Activated CD8-positive, alpha-beta T cell treated with anti-CD3 and anti-CD28 coated beads, Interleukin-2, amount 10 ng/mL, durations not matched to agents 7 days and 5 days (primary cell): ENCODE measurements at regions of chr11 and their contacts with region 1.

Region 1: GRCh38 chr11:67482825-67483798 is at the start of gene AIP:
- DNase-seq: peak; percentile 99
- ATAC-seq: peak; percentile 87
- H3K4me3 Mint-ChIP-seq: peak within 1 kb of the TSS; percentile 93
- H3K27ac Mint-ChIP-seq: peak within 1 kb of the TSS; percentile 99
- H3K4me1 Mint-ChIP-seq: peaks cover 53% of the 10 kb centered on the region
- H3K27me3 Mint-ChIP-seq: peaks cover 5% of the 10 kb centered on the region
- total RNA-seq, gene AIP: 156 to 163 TPM

Region 2: DNA sequence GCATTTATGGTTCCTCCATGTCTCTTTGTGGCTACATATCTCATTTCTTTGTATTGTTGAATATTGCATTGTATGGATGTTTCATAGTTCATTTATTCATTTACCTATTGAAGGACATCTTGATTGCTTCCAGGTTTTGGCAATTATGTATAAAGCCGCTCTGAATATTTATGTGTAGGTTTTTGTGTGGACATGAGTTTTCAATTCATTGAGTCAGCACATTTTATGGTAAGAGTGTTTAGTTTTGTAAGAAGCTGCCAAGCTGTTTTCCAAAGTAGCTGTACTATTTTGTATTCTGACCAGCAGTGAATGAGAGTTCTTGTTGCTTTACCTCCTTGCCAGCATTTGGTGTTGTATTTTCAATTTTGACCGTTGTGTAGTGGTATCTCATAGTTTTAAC is 324.9 kb before region 1 on chr11:
- CTCF ChIA-PET with region 1: no interaction called
- POLR2A ChIA-PET with region 1: no interaction called
- DNase-seq: no peak
- ATAC-seq: no peak
- H3K4me3 Mint-ChIP-seq: no peak overlapping the region
- H3K27ac Mint-ChIP-seq: no peak overlapping the region
- H3K4me1 Mint-ChIP-seq: peaks cover 11% of the 10 kb centered on the region
- H3K27me3 Mint-ChIP-seq: no peaks in the 10 kb centered on the region

Region 3: DNA sequence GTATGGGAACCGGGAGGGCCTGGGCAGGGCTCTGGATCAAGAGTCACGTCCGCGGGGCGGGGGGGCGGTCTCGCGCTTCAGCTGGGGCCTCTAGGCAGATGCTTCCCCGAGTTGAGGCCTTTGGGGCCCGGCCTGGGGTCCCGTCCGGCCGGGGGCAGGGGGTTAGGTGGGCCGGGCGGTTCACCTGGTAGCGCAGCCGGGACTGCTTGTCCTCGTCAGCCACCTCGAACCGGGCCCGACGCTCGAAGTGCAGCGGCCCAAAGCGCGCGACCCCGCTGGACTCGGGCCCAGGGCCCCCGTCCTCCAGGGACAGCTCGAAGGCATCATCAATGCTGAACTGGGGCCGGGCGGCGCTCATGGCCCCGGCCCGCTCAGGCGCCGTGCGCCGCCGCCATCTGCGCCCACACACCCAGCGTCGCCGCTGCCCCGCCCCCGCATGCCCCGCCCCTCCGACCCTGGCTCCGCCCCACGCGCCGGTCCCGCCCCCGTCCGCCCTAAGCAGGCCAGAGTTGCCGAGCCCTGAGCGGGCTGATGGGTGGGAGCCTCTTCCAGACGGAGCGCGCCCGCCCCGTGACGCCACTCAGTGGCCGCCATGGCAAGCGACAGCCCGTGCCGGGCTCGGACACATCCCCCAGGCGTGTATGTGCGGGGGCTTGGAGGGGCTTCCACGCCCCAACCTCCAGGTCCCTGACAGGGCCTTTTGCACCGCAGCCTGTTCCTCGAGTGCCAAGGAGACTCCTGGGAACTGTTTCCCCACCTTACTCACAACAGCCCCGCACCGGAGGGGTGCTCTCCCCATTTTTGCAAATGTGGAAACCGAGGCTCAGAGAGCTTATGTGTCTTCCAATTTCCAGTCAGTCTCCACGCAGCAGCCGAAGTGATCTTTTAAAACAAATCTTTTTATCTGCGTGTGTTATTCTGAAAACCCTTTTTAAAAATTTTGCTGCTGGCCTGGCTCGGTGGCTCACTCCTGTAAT is 14.0 kb before region 1 on chr11 and contains the start of gene TMEM134:
- CTCF ChIA-PET with region 1: interaction called, 6 read pairs
- POLR2A ChIA-PET with region 1: interaction called, 70 read pairs
- DNase-seq: peak; percentile 92
- ATAC-seq: peak; percentile 79
- H3K4me3 Mint-ChIP-seq: peak within 1 kb of the TSS; percentile 87
- H3K27ac Mint-ChIP-seq: peak within 1 kb of the TSS; percentile 83
- H3K4me1 Mint-ChIP-seq: peaks cover 37% of the 10 kb centered on the region
- H3K27me3 Mint-ChIP-seq: no peaks in the 10 kb centered on the region
- total RNA-seq, gene TMEM134: 39.6 to 42.5 TPM

Region 4: DNA sequence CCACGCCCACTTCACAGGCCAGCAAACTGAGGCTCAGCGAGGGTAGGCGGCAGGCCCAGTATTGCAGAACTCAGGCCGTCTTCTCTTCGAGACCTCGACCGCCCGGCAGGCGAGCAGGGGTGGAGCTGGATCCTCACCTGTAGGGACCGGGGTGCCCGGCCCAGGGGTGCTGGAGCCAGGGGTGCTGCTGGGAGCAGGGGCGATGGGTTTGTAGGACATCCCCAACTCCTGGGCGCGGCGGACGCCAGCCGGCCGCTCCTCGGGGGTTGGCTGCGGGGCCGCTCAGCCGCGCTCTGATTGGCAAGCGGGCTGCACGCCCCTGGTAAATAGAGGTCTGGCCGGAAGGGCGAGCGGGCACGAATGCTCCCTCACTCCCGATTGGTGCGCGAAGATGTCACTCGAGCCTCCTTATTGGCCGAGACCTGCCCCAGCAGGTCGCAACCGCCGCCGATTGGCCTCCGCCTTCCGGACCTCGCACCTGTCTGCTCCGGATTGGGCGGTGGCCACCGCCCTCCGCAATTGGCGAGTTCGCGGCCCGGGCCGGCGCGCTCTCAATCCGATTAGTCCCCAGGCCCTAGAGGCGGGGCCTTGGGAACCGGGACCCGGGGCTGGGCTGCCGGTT is 24.9 kb after region 1 on chr11 and contains the start of gene CDK2AP2:
- CTCF ChIA-PET with region 1: interaction called, 9 read pairs
- POLR2A ChIA-PET with region 1: interaction called, 12 read pairs
- DNase-seq: peak; percentile 99
- ATAC-seq: peak; percentile 83
- H3K4me3 Mint-ChIP-seq: peak within 1 kb of the TSS; percentile 89
- H3K27ac Mint-ChIP-seq: peak within 1 kb of the TSS; percentile 94
- H3K4me1 Mint-ChIP-seq: peaks cover 38% of the 10 kb centered on the region
- H3K27me3 Mint-ChIP-seq: peaks cover 8% of the 10 kb centered on the region
- total RNA-seq, gene CDK2AP2: 168 to 175 TPM